Dorsolateral prefrontal cortex (tissue), 120 donors: ENCODE measurements at regions of chr18 and their contacts with region 1.

Region 1: DNA sequence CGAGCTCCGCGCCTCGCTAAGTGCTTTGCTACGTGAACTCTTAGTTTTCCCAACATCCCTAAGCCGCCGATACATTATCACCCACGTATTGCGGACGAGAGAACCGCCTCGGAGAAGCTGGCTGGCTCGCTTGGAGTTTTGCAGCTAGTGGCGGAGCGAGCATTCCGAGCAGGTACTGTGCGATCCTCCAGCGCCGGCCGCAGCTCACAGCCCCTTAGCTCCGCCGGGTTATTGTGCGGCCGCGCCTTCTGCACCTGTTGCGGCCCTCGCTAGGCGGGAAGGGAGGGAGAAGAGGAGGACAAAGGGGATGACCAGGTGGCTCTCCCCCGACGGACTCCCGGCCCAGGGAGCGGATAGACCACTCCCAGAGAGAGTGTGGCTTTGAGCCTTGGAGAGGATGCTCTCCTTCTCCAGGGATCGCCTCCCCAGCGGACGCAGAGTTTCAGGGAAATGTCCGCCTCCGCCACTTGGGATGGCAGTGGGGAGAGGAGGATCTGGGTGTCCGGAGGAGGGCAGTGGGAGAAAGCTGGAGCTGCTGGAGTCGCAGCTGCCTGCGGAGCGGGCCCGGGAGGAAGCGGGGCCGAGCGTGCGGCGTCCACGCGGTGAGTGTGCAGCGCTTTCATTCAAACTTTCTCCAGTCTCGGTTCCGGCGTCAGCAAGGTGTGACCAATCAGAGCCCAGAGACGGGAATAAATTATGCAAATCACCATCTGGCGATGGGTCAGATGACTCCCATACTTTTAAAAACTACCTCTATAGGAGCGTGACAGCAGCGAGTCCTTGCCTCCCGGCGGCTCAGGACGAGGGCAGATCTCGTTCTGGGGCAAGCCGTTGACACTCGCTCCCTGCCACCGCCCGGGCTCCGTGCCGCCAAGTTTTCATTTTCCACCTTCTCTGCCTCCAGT is at the start of gene LIPG:
- DNase-seq: peak in 2 of 10 donors; percentile 15 to 50
- H3K4me3 ChIP-seq: peak within 1 kb of the TSS; percentile 25 to 72 (median 49)
- H3K27ac ChIP-seq: no peak within 1 kb of the TSS
- H3K27me3 ChIP-seq: peaks cover 0 to 55% (median 33%) of the 10 kb centered on the region in 45 donors
- CTCF ChIP-seq: no peak
- total RNA-seq, gene LIPG: 0.18 to 8.5 (median 1.8) TPM

Region 2: GRCh38 chr18:49618742-49619681 is 57.5 kb after region 1 on chr18:
- intact Hi-C with region 1: loop called in 1 of 2 experiments (anchors 5 kb)
- DNase-seq: no peak
- H3K4me3 ChIP-seq: no peak overlapping the region
- H3K27ac ChIP-seq: no peak overlapping the region
- H3K27me3 ChIP-seq: peaks cover 0 to 19% (median 0%) of the 10 kb centered on the region in 45 donors
- CTCF ChIP-seq: no peak